Breast epithelium (tissue), 4 donors: ENCODE measurements at regions of chr4 and their contacts with region 1.

Region 1: GRCh38 chr4:132540284-132541173 is 608.6 kb upstream of the PCDH10 start:
- DNase-seq: no peak
- H3K4me3 ChIP-seq: no peak overlapping the region
- H3K27ac ChIP-seq: no peak overlapping the region
- H3K4me1 ChIP-seq: no peaks in the 10 kb centered on the region
- H3K27me3 ChIP-seq: no peaks in the 10 kb centered on the region
- CTCF ChIP-seq: no peak
- POLR2A ChIP-seq: no peak

Region 2: GRCh38 chr4:132556316-132556715 is 15.8 kb after region 1 on chr4:
- intact Hi-C with region 1: no loop called
- DNase-seq: no peak
- H3K4me3 ChIP-seq: no peak overlapping the region
- H3K27ac ChIP-seq: no peak overlapping the region
- H3K4me1 ChIP-seq: no peaks in the 10 kb centered on the region
- H3K27me3 ChIP-seq: no peaks in the 10 kb centered on the region
- CTCF ChIP-seq: no peak
- POLR2A ChIP-seq: no peak

Region 3: GRCh38 chr4:133839326-133839725 is 1298.8 kb after region 1 on chr4:
- intact Hi-C with region 1: loop called (anchors 10 kb)
- DNase-seq: no peak
- H3K4me3 ChIP-seq: no peak overlapping the region
- H3K27ac ChIP-seq: no peak overlapping the region
- H3K4me1 ChIP-seq: no peaks in the 10 kb centered on the region
- H3K27me3 ChIP-seq: no peaks in the 10 kb centered on the region
- CTCF ChIP-seq: no peak
- POLR2A ChIP-seq: no peak